GM18951 (cell line): ENCODE measurements at regions of chr9 and their contacts with region 1.

Region 1: GRCh38 chr9:88110026-88110425 is 28.2 kb downstream of the SPATA31C2 start:
- POLR2A ChIP-seq: no peak

Region 2: GRCh38 chr9:87950765-87951488 is 159.1 kb before region 1 on chr9:
- in situ Hi-C with region 1: loop called (anchors 10 kb)
- POLR2A ChIP-seq: no peak